AG04449 (cell line): ENCODE measurements at regions of chr1 and their contacts with region 1.

Region 1: DNA sequence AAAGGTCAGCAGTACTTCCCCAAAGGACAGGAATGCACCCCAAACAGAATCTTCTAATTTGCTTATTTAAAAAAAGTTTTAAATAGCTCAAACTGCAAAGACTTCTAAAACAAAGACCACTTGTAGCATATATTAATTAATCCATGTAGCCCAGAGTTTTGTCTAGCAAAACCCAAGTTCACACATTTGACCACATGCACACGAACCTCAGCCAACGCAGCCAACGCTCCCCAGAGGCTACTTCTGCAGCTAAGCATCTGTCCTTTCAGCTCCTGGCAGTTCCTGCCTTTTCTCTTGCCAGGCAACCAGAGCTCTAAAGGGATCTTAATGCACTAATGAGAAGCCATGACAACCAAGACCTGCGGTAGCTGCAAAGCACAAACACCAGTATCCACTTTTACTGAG is 89.6 kb downstream of the RERE start:
- DNase-seq: no peak
- H3K4me3 ChIP-seq: no peak overlapping the region
- CTCF ChIP-seq: no peak

Region 2: GRCh38 chr1:8373581-8374241 is 354.1 kb before region 1 on chr1:
- CTCF ChIA-PET with region 1: interaction called, 10 read pairs
- POLR2A ChIA-PET with region 1: no interaction called
- DNase-seq: peak; percentile 49
- H3K4me3 ChIP-seq: peak overlapping the region; percentile 20; the same call in 1 of the 2 replicates
- CTCF ChIP-seq: no peak

Region 3: GRCh38 chr1:8396786-8397406 is 330.9 kb before region 1 on chr1:
- CTCF ChIA-PET with region 1: no interaction called
- POLR2A ChIA-PET with region 1: no interaction called
- DNase-seq: peak; percentile 99
- H3K4me3 ChIP-seq: no peak overlapping the region
- CTCF ChIP-seq: no peak

Region 4: GRCh38 chr1:8571200-8571984 is 156.4 kb before region 1 on chr1:
- CTCF ChIA-PET with region 1: interaction called, 233 read pairs
- POLR2A ChIA-PET with region 1: no interaction called
- DNase-seq: no peak
- H3K4me3 ChIP-seq: no peak overlapping the region
- CTCF ChIP-seq: peak; percentile 9

Region 5: GRCh38 chr1:8590526-8591351 is 137.1 kb before region 1 on chr1:
- CTCF ChIA-PET with region 1: interaction called, 16 read pairs
- POLR2A ChIA-PET with region 1: no interaction called
- DNase-seq: no peak
- H3K4me3 ChIP-seq: no peak overlapping the region
- CTCF ChIP-seq: no peak

Region 6: DNA sequence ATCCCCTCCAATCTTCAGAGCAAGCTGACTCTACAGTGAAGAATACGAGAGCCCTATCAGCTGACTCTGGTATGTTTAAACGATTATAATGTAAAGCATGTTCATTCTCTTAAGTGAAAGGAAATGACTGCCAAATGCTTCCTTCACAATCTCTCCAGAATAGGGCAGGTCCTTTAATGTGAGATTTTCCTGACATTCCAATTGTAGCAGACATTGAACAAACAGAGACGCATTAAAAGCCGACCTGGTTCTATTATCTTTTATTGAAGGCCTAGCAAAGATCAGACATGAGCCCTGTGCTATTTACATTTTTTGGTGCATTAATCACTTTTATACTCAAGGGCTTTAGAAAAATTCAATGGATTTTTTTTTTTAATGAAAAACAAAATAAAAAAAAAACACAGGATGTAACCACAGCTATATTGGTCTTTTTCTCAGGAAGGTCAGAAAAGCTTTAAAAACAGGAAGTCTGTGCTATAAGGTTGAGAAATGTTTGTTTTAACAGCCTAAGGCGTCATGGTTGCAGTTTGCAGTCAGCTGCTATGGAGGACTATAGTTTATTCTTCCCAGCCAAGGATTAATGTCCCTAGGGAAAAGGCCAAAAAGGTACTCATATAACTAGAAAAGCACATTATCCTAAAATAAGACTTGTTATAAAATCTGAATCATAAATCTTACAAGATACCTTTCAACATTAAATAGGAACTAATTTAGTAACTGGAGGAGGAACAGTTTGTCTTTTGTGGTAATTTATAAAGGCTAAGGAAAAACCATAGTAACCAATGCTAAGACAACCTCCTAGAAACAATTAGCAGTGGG is 15.2 kb before region 1 on chr1:
- CTCF ChIA-PET with region 1: interaction called, 51 read pairs
- POLR2A ChIA-PET with region 1: no interaction called
- DNase-seq: peak; percentile 90
- H3K4me3 ChIP-seq: no peak overlapping the region
- CTCF ChIP-seq: no peak

Region 7: GRCh38 chr1:8752921-8753713 is 25.3 kb after region 1 on chr1:
- CTCF ChIA-PET with region 1: interaction called, 161 read pairs
- POLR2A ChIA-PET with region 1: no interaction called
- DNase-seq: no peak
- H3K4me3 ChIP-seq: no peak overlapping the region
- CTCF ChIP-seq: no peak

Region 8: DNA sequence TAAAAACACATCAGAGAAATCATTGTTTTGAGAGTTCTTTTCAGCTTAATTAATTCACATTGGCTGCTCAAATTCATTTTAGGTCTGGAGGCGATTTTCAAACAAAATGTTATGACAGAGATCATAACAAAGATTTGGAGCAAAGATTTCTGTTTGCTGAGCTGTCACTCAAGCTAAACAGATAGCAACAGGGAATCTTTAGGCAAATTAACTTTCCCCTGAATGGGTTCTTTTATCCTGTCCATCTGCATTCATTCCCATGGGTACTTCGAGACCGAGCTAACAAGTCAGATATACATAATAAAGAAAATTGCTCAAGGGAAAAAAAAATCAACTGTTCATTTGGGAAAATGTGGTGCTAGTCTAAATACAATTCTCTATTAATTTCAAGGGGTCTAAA is 187.6 kb after region 1 on chr1:
- CTCF ChIA-PET with region 1: no interaction called
- POLR2A ChIA-PET with region 1: no interaction called
- DNase-seq: no peak
- H3K4me3 ChIP-seq: no peak overlapping the region
- CTCF ChIP-seq: no peak